A549 (cell line): ENCODE measurements at regions of chr3 and their contacts with region 1.

Region 1: DNA sequence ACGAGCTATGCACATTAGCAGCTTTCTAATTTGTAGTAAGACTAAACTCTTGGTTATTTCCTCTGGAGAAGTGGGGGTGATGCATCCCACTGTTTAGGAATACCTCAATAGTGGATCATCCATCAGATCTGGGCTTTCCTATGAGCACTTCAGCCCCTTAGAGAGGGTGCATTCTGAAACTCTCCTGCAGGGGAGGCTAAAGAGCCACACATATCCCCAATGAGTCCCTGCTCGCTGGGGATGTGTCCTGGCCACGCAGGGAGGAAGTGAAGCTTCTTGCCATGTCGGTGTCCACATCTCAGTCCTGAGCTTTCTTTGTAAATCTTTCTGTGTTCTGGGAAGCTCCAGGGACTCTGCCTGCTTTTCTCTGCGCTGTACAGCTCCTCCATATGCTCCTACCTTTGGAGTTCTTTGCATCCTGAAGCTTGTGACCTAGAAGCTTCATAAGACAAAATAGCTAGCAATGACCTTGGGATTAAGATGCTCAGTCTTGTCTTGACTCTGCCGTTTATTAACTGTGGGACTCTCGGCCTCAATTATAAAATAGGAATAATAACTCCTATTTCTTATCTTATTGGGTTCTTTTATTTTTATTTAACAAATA is 28.3 kb upstream of the MASP1 start:
- DNase-seq: peak; percentile 33 to 58
- ATAC-seq: peak; percentile 87 to 96
- H3K4me3 ChIP-seq: no peak overlapping the region
- H3K27ac ChIP-seq: no peak overlapping the region
- H3K4me1 ChIP-seq: peaks cover 6% of the 10 kb centered on the region; the same call in 1 of the 3 replicates
- CTCF ChIP-seq: peak; percentile 51; the same call in 2 of the 3 replicates
- EP300 ChIP-seq: no peak
- POLR2A ChIP-seq: no peak
- RAD21 ChIP-seq: peak; percentile 69 to 79

Region 2: GRCh38 chr3:187215460-187215859 is 104.3 kb before region 1 on chr3:
- CTCF ChIA-PET with region 1: interaction called, 51 read pairs
- POLR2A ChIA-PET with region 1: no interaction called
- DNase-seq: no peak
- ATAC-seq: no peak
- H3K4me3 ChIP-seq: no peak overlapping the region
- H3K27ac ChIP-seq: no peak overlapping the region
- H3K4me1 ChIP-seq: no peaks in the 10 kb centered on the region
- CTCF ChIP-seq: no peak
- EP300 ChIP-seq: no peak
- POLR2A ChIP-seq: no peak
- RAD21 ChIP-seq: no peak

Region 3: GRCh38 chr3:187305881-187306280 is 13.9 kb before region 1 on chr3:
- CTCF ChIA-PET with region 1: interaction called, 35 read pairs
- POLR2A ChIA-PET with region 1: no interaction called
- DNase-seq: no peak
- ATAC-seq: no peak
- H3K4me3 ChIP-seq: no peak overlapping the region
- H3K27ac ChIP-seq: no peak overlapping the region
- H3K4me1 ChIP-seq: no peaks in the 10 kb centered on the region
- CTCF ChIP-seq: no peak
- EP300 ChIP-seq: no peak
- POLR2A ChIP-seq: no peak
- RAD21 ChIP-seq: no peak

Region 4: DNA sequence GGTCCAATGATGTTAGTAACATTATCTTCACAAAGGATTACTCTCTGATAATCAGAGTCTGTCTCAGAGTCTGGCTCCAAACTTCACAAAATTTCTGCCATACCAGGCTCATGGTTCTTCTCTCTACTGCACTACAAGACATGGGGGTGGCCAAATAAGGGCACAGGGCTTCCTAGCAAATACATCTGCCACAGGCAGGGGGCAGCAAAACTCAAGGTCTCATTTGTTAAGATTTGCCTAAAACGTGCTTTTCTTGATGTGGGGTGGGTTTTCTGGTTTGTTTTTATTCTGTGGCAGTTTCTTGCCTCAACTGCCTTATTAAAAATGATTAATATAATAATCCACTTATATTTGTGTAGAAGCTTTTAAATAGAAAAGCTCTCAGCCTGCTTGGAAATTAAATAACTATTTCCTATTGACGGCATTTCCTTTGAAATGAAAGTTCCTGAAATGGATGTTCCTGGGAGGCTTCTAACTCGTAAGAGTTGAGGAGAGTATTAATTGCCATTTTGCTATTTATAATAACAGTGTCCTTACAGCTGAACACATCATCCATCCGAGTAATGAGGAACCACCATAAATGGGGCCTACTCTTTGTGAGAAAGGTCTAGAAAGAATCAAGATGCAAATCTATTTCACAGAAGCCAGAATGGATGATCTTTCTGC is 296.6 kb after region 1 on chr3:
- CTCF ChIA-PET with region 1: interaction called, 21 read pairs
- POLR2A ChIA-PET with region 1: no interaction called
- DNase-seq: peak; percentile 18 to 61
- ATAC-seq: peak in 1 of 2 experiments; percentile 76; a peak in 3 of 6 replicates
- H3K4me3 ChIP-seq: no peak overlapping the region
- H3K27ac ChIP-seq: no peak overlapping the region
- H3K4me1 ChIP-seq: no peaks in the 10 kb centered on the region
- CTCF ChIP-seq: peak; percentile 58
- EP300 ChIP-seq: no peak
- POLR2A ChIP-seq: no peak
- RAD21 ChIP-seq: peak; percentile 48 to 52

Region 5: GRCh38 chr3:187662848-187663409 is 343.1 kb after region 1 on chr3:
- CTCF ChIA-PET with region 1: interaction called, 564 read pairs
- POLR2A ChIA-PET with region 1: no interaction called
- DNase-seq: no peak
- ATAC-seq: no peak
- H3K4me3 ChIP-seq: no peak overlapping the region
- H3K27ac ChIP-seq: no peak overlapping the region
- H3K4me1 ChIP-seq: no peaks in the 10 kb centered on the region
- CTCF ChIP-seq: no peak
- EP300 ChIP-seq: no peak
- POLR2A ChIP-seq: no peak
- RAD21 ChIP-seq: no peak

Region 6: DNA sequence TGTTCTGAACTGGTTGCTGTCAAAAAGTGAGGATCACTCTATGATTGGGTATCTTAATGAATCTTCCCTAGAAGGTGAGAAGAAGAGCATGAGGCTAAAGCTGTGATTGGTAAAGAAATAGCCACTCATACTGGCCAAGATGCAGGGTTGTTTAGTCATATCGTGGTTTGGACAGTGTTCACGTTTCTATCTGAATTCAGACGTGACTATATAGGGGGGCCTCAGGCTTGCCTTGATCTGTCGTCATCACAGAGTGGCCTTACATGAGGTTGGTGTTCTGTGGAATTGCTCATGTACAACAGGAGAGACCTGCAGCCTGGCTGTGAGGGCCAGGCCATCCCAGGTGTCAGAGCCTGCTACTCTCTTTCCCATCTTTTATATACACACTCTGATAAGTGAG is 370.2 kb after region 1 on chr3:
- CTCF ChIA-PET with region 1: interaction called, 564 read pairs
- POLR2A ChIA-PET with region 1: no interaction called
- DNase-seq: no peak
- ATAC-seq: no peak
- H3K4me3 ChIP-seq: no peak overlapping the region
- H3K27ac ChIP-seq: no peak overlapping the region
- H3K4me1 ChIP-seq: no peaks in the 10 kb centered on the region
- CTCF ChIP-seq: no peak
- EP300 ChIP-seq: no peak
- POLR2A ChIP-seq: no peak
- RAD21 ChIP-seq: no peak

Region 7: DNA sequence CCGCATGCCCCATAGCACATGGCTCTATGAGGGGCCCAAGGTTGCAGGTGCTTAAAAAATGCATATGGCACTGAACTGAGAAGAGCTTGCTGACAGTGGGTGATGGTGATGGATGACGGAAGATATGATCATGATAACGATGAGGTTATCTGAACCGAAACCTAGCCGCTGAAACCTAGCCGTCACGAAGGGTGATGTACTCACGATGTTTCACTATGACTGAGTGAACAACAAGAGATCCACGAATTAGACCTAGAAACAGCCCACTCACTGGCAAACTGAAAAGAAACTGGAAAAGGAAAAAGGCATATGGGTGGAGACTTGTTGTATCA is 483.1 kb after region 1 on chr3:
- CTCF ChIA-PET with region 1: no interaction called
- POLR2A ChIA-PET with region 1: no interaction called
- DNase-seq: no peak
- ATAC-seq: no peak
- H3K4me3 ChIP-seq: no peak overlapping the region
- H3K27ac ChIP-seq: no peak overlapping the region
- H3K4me1 ChIP-seq: no peaks in the 10 kb centered on the region
- CTCF ChIP-seq: no peak
- EP300 ChIP-seq: no peak
- POLR2A ChIP-seq: no peak
- RAD21 ChIP-seq: no peak